Ovary (tissue), 10 donors: ENCODE measurements at regions of chr21 and their contacts with region 1.

Region 1: DNA sequence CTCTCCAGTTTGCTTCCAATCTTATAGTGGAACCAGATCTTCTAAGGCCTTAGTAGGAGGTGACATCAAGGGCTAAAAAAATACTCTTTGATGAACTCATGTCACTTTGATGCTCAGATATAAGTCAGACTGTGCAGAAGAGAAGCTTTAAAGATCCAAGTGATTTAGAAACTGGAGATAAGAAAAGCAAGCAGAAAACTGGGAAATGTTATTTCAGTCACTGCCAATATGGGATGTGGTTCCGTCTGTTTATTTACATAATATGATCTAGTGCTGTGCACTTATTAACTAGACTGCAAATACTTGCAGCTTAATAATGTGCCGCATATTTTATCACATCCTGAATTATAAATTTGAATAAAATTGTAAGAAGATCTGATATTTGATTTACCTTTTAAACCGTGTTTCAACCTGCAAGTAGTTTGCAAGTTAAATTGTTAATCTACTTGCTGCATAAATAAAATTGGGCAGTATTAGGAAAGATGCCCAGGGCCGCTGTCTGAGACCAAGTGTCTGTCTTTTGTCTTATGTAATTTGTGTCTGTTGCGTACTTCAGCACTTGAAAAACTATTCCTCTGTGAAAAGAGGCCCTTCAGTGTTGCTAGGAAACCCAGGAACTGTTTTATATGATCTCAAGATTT is 29.6 kb downstream of the CXADR start:
- DNase-seq: no peak
- H3K4me3 ChIP-seq: no peak overlapping the region
- H3K27ac ChIP-seq: no peak overlapping the region
- H3K4me1 ChIP-seq: no peaks in the 10 kb centered on the region
- H3K27me3 ChIP-seq: no peaks in the 10 kb centered on the region
- CTCF ChIP-seq: no peak
- EP300 ChIP-seq: no peak
- POLR2A ChIP-seq: no peak

Region 2: DNA sequence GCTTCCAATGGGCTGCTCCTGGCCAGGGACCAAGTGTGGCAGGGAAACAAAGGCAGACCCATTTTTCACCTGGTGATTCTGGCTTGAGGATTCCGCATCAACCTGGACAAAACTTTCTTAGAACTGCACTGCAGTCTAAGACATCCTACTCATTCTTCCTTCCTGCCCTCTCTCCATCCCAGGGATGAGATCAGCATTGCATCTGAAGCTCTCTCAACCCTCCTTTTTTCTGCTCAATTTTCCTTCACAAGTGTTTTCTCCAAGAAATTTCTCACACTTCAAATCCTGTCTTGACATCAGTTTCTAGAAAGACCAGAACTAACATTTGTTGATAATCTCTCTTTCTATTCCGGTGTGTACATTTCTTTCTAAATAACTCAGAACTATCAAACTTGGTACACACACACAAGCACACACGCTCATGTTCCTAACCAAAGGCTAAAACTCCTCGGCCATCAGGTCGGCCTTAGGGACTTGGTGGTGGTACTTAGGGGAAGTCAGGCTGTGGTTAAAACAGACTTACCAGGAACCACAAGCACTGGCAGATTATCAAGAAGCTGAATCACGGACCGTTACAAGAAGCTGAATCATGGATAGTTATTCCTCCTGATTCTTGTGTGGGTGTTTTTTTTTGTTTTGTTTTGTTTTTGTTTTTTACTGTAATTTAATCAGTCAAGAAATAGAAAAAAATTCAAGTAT is 50.6 kb before region 1 on chr21:
- intact Hi-C with region 1: no loop called
- DNase-seq: no peak
- H3K4me3 ChIP-seq: no peak overlapping the region
- H3K27ac ChIP-seq: no peak overlapping the region
- H3K4me1 ChIP-seq: no peaks in the 10 kb centered on the region
- H3K27me3 ChIP-seq: no peaks in the 10 kb centered on the region
- CTCF ChIP-seq: no peak
- EP300 ChIP-seq: no peak
- POLR2A ChIP-seq: no peak

Region 3: DNA sequence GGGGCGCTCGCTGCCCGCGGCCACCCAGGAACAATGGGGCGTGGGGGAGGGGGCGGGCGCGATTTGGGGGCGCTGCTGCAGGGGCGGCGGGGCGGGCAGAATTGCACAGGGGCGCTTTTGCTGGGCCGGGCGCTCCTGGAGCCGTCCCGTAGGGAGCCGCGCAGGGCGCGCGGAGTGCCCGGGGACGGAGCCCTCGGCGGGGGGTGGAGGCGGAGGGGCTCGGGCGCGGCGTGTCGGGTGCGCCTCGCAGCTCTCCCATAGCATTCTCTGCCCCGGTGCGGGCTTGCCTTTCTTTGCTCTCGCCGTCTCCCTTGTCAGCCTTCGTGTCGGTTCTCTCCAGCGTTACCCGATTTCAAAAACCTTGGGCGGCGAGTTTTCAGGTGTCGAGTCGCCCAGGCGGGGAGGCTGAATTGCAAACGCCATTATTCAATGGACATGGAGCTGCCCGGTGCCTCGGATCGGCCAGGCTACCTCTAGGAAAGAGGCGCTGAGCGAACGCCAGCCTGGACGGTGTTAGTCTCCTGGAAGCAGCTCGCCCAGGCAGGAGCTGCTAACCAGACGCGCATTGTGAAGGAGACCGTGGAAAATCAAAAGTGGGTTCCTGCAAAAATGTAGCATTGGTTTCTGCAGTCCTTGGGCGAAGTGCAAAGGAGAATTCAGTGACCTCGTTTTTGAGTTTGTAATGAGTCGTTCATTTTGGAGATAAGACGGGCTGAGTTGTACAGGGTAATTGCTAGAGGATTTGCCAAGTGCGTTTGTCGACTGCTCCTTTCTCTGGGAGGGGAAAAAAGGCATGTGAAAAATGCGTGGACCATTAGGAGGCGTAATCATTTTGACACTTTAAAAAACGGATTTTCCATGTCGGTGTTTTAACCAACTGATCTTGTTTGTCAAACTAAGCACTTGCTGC is 29.0 kb before region 1 on chr21:
- intact Hi-C with region 1: loop called in 1 of 4 experiments (anchors 1 kb)
- DNase-seq: peak in 4 of 5 donors; percentile 10 to 42 (median 26)
- H3K4me3 ChIP-seq: peak overlapping the region; percentile 86
- H3K27ac ChIP-seq: no peak overlapping the region
- H3K4me1 ChIP-seq: no peaks in the 10 kb centered on the region
- H3K27me3 ChIP-seq: no peaks in the 10 kb centered on the region
- CTCF ChIP-seq: no peak
- EP300 ChIP-seq: no peak
- POLR2A ChIP-seq: no peak

Region 4: DNA sequence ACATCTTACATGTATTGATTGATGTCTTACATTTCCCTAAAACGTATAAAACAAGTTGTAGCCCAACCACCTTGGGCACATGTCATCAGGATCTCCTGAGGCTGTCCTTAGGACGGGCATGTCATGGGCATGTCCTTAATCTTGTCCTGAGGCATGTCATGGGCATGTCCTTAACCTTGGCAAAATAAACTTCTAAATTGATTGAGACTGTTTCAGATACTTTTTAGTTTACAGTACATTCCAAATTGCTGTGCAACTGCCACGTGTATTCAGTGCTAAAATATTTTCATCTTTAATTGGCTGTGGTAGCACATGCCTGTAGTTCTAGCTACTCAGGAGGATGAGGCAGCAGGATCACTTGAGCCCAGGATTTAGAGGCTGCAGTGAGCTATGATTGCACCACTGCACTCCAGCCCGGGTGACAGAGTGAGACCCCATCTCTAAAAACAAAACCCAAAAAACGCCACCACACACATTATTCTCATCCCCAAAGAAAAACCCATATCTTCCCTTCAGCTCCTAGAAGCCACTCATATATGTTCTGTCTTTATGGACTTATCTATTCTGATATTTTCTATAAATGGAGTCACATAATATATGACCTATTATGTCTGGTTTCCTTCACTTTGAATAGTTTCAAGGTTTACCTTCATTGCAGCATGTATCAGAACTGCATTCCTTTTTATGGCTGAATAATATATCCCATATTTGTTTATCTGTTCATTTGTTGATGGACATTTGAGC is 166.2 kb after region 1 on chr21:
- intact Hi-C with region 1: no loop called
- DNase-seq: no peak
- H3K4me3 ChIP-seq: no peak overlapping the region
- H3K27ac ChIP-seq: no peak overlapping the region
- H3K4me1 ChIP-seq: no peaks in the 10 kb centered on the region
- H3K27me3 ChIP-seq: no peaks in the 10 kb centered on the region
- CTCF ChIP-seq: no peak
- EP300 ChIP-seq: no peak
- POLR2A ChIP-seq: no peak

Region 5: DNA sequence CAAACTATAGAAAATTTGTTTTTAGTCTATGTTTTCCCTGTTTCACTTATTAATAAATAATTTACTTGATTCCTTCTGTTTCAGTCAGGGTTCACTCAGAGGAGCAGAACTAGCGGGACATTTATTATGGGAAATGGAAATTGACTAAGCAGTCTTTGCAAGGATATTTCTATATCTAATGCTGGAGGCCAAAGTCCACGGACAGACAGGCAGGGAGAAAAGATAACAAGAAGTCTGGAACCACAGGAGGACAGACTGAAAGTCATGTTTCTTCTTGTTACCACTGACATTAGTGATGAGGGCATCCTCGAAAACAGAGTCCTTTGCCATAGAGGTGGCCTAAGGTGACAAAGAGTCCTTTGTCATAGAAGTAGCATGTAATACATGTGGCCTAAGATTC is 1605.6 kb after region 1 on chr21:
- intact Hi-C with region 1: no loop called
- DNase-seq: no peak
- H3K4me3 ChIP-seq: no peak overlapping the region
- H3K27ac ChIP-seq: no peak overlapping the region
- H3K4me1 ChIP-seq: no peaks in the 10 kb centered on the region
- H3K27me3 ChIP-seq: no peaks in the 10 kb centered on the region
- CTCF ChIP-seq: no peak
- EP300 ChIP-seq: no peak
- POLR2A ChIP-seq: no peak